Mammary epithelial cell (primary cell): ENCODE measurements at regions of chr3 and their contacts with region 1.

Region 1: DNA sequence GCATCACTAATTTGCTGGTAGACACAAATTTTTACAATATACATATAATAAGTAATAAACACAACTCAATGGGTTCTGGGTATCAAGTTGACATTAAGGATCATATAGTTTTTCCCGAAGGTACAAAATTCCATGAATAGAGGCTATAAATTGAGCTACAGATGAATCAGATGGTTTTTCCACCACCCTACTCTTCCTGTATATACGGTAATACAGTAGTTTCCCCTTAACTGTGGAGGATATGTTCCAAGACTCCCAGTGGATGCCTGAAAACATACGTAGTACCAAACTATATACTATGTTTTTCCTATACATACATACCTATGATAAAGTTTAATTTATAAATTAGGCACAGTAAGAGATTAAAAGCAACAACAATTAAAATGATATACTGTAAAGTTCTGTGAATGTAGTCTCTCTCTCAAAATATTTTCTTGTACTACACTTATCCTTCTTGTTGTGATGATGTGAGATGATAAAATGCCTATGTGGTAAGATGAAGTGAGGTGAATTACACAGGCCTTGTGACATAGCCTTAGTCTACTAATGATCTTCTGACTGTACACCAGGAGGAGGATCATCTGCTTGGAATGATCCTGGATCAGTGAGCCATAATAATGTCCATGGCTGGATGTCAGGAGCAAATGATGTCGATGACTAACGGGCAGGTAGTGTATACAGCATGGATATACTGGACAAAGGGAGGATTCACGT is 116.7 kb downstream of the NR1I2 start:
- DNase-seq: peak; percentile 63
- H3K4me3 ChIP-seq: no peak overlapping the region
- H3K27ac ChIP-seq: no peak overlapping the region
- H3K4me1 ChIP-seq: no peaks in the 10 kb centered on the region
- H3K27me3 ChIP-seq: no peaks in the 10 kb centered on the region
- CTCF ChIP-seq: no peak

Region 2: DNA sequence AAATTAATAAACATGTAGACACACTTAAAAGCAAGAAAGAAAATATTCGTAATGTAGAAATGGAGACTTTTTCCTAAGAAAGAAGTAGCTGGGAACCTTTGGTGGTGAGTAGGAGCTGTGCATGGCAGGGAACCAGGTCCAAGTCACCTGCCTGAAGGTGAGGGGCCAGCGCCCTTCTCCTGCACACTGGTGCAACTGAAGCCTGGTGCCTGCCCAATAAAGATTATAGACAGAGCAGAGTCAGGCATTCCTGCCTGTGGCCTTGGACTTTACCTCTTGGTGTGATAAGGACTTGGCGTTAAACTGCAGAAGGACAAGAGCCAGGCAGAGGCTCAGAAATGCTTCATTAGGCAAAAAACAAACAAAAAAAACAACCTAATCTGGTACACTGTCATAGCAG is 181.6 kb before region 1 on chr3:
- CTCF ChIA-PET with region 1: no interaction called
- dilution Hi-C with region 1: no loop called
- in situ Hi-C with region 1: no loop called
- intact Hi-C with region 1: no loop called
- DNase-seq: no peak
- H3K4me3 ChIP-seq: no peak overlapping the region
- H3K27ac ChIP-seq: no peak overlapping the region
- H3K4me1 ChIP-seq: no peaks in the 10 kb centered on the region
- H3K27me3 ChIP-seq: no peaks in the 10 kb centered on the region
- CTCF ChIP-seq: no peak

Region 3: GRCh38 chr3:119849126-119849525 is 49.5 kb before region 1 on chr3:
- CTCF ChIA-PET with region 1: no interaction called
- dilution Hi-C with region 1: no loop called
- in situ Hi-C with region 1: no loop called
- intact Hi-C with region 1: no loop called
- DNase-seq: no peak
- H3K4me3 ChIP-seq: no peak overlapping the region
- H3K27ac ChIP-seq: no peak overlapping the region
- H3K4me1 ChIP-seq: no peaks in the 10 kb centered on the region
- H3K27me3 ChIP-seq: no peaks in the 10 kb centered on the region
- CTCF ChIP-seq: no peak

Region 4: GRCh38 chr3:119883461-119884160 is 15.0 kb before region 1 on chr3:
- CTCF ChIA-PET with region 1: no interaction called
- dilution Hi-C with region 1: no loop called
- in situ Hi-C with region 1: no loop called
- intact Hi-C with region 1: no loop called
- DNase-seq: no peak
- H3K4me3 ChIP-seq: no peak overlapping the region
- H3K27ac ChIP-seq: no peak overlapping the region
- H3K4me1 ChIP-seq: no peaks in the 10 kb centered on the region
- H3K27me3 ChIP-seq: no peaks in the 10 kb centered on the region
- CTCF ChIP-seq: no peak

Region 5: DNA sequence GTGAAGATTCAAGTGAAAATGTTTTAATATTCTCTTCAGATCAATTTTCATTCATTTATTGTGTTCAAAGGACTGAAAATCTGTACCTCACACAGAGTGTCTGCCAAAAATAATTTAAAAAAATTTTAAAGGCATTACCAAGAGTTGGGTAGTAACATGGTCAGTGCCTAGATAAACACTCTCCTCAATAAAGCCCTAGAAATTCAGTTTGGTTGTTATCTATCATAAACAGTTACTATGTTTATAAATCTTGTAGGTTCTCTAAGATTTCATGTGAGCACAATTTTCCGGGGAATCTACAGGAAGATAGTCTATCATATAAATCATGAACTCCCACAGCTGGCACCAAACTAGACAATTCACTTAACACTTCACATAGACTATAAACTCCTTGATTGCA is 67.1 kb after region 1 on chr3:
- CTCF ChIA-PET with region 1: interaction called, 17 read pairs
- dilution Hi-C with region 1: no loop called
- in situ Hi-C with region 1: no loop called
- intact Hi-C with region 1: no loop called
- DNase-seq: no peak
- H3K4me3 ChIP-seq: no peak overlapping the region
- H3K27ac ChIP-seq: no peak overlapping the region
- H3K4me1 ChIP-seq: peaks cover 10% of the 10 kb centered on the region
- H3K27me3 ChIP-seq: no peaks in the 10 kb centered on the region
- CTCF ChIP-seq: no peak